ENCODE measurements at regions of chr20 and their contacts with region 1.

Region 1: GRCh38 chr20:36591854-36592641 is 13.5 kb upstream of the RAB5IF start:
- DNase-seq: peak in 1 of 2 donors; percentile 32
- ATAC-seq: peak in 3 of 8 donors; percentile 40 to 45 (median 41)
- H3K4me3 ChIP-seq: no peak overlapping the region
- H3K27ac ChIP-seq: peak overlapping the region in 1 of 10 donors; percentile 31
- H3K4me1 ChIP-seq: peaks cover 0 to 45% (median 0%) of the 10 kb centered on the region in 9 donors
- H3K27me3 ChIP-seq: no peaks in the 10 kb centered on the region
- CTCF ChIP-seq: peak; percentile 19 to 65 (median 47)

Region 2: GRCh38 chr20:36214684-36215256 is 377.3 kb before region 1 on chr20:
- intact Hi-C with region 1: loop called in 1 of 10 experiments (anchors 10 kb)
- DNase-seq: no peak
- ATAC-seq: peak in 4 of 8 donors; percentile 49 to 62 (median 54)
- H3K4me3 ChIP-seq: no peak overlapping the region
- H3K27ac ChIP-seq: no peak overlapping the region
- H3K4me1 ChIP-seq: no peaks in the 10 kb centered on the region
- H3K27me3 ChIP-seq: no peaks in the 10 kb centered on the region
- CTCF ChIP-seq: peak in 8 of 9 donors; percentile 41 to 66 (median 56)

Region 3: DNA sequence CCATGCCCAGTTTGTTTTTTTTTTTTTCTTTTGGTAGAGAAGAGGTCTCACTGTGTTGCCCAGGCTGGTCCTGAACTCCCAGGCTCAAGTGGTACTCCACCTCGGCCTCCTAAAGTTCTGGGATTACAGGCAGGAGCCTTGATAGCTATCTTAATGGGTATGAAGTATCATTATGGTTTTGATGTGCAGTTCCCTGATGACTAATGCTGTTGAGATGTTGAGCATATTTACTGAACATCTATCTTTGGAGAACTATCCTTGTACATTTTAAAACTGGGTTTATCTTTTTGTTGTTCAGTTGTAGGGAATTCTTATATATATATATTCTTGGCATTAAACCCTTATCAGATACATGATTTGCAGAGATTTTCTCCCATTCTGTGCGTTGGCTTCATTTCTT is 72.1 kb before region 1 on chr20:
- intact Hi-C with region 1: no loop called
- DNase-seq: no peak
- ATAC-seq: no peak
- H3K4me3 ChIP-seq: no peak overlapping the region
- H3K27ac ChIP-seq: no peak overlapping the region
- H3K4me1 ChIP-seq: peaks cover 0 to 37% (median 15%) of the 10 kb centered on the region in 9 donors
- H3K27me3 ChIP-seq: no peaks in the 10 kb centered on the region
- CTCF ChIP-seq: no peak

Region 4: GRCh38 chr20:36550797-36551299 is 41.2 kb before region 1 on chr20:
- intact Hi-C with region 1: loop called in 8 of 10 experiments (anchors 1 to 5 kb)
- DNase-seq: no peak
- ATAC-seq: peak; percentile 35 to 54 (median 46)
- H3K4me3 ChIP-seq: no peak overlapping the region
- H3K27ac ChIP-seq: peak overlapping the region in 9 of 10 donors; percentile 14 to 71 (median 51)
- H3K4me1 ChIP-seq: peaks cover 0 to 52% (median 16%) of the 10 kb centered on the region in 9 donors
- H3K27me3 ChIP-seq: no peaks in the 10 kb centered on the region
- CTCF ChIP-seq: no peak

Region 5: DNA sequence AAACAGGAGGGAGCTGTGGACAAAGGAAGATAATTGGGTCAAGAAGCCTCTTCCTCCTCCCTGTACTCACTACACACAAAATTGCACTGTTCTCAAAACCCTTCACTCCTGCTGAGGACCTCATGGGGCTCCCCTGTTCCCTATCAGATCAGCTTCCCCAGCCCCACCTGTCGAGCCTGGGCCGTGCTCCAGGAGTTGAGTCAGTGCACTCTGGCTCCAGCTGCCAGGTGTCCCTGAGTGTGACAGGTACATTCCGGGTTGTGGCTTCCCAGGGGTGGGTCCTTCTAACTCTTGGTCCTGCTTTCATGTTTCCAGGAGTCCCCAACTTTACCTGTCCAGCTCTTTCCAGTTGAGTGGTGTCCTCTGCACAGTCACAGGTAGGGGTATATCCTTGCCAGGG is 21.9 kb after region 1 on chr20:
- intact Hi-C with region 1: no loop called
- DNase-seq: no peak
- ATAC-seq: no peak
- H3K4me3 ChIP-seq: no peak overlapping the region
- H3K27ac ChIP-seq: no peak overlapping the region
- H3K4me1 ChIP-seq: peaks cover 0 to 7% (median 0%) of the 10 kb centered on the region in 9 donors
- H3K27me3 ChIP-seq: no peaks in the 10 kb centered on the region
- CTCF ChIP-seq: no peak

Measured in heart right ventricle (tissue), 16 donors.